Activated CD8-positive, alpha-beta T cell treated with anti-CD3 and anti-CD28 coated beads for 36 hours (primary cell): ENCODE measurements at regions of chr11 and their contacts with region 1.

Region 1: GRCh38 chr11:65919146-65920033 is at the start of gene DRAP1:
- DNase-seq: peak; percentile 99
- ATAC-seq: peak; percentile 92
- H3K4me3 Mint-ChIP-seq: peak within 1 kb of the TSS; percentile 92
- H3K27ac Mint-ChIP-seq: peak within 1 kb of the TSS; percentile 87
- H3K4me1 Mint-ChIP-seq: peaks cover 32% of the 10 kb centered on the region
- H3K27me3 Mint-ChIP-seq: no peaks in the 10 kb centered on the region
- CTCF ChIP-seq: no peak
- total RNA-seq, gene DRAP1: 135 TPM

Region 2: GRCh38 chr11:65786001-65786785 is 133.2 kb before region 1 on chr11:
- CTCF ChIA-PET with region 1: no interaction called
- POLR2A ChIA-PET with region 1: no interaction called
- intact Hi-C with region 1: no loop called
- DNase-seq: no peak
- ATAC-seq: no peak
- H3K4me3 Mint-ChIP-seq: peak overlapping the region; percentile 37
- H3K27ac Mint-ChIP-seq: no peak overlapping the region
- H3K4me1 Mint-ChIP-seq: peaks cover 25% of the 10 kb centered on the region
- H3K27me3 Mint-ChIP-seq: peaks cover 42% of the 10 kb centered on the region
- CTCF ChIP-seq: no peak

Region 3: GRCh38 chr11:65900125-65900898 is 19.1 kb before region 1 on chr11 and contains the start of gene FOSL1:
- CTCF ChIA-PET with region 1: interaction called, 3 read pairs
- POLR2A ChIA-PET with region 1: interaction called, 18 read pairs
- intact Hi-C with region 1: no loop called
- DNase-seq: peak; percentile 97
- ATAC-seq: peak; percentile 88
- H3K4me3 Mint-ChIP-seq: peak within 1 kb of the TSS; percentile 80
- H3K27ac Mint-ChIP-seq: peak within 1 kb of the TSS; percentile 86
- H3K4me1 Mint-ChIP-seq: peaks cover 32% of the 10 kb centered on the region
- H3K27me3 Mint-ChIP-seq: peaks cover 5% of the 10 kb centered on the region
- CTCF ChIP-seq: no peak
- total RNA-seq, gene FOSL1: 9.9 to 10.2 TPM

Region 4: GRCh38 chr11:65961232-65961901 is 42.0 kb after region 1 on chr11 and contains the start of gene SART1:
- CTCF ChIA-PET with region 1: no interaction called
- POLR2A ChIA-PET with region 1: interaction called, 6 read pairs
- intact Hi-C with region 1: loop called (anchors 1 kb)
- DNase-seq: peak; percentile 98
- ATAC-seq: peak; percentile 91
- H3K4me3 Mint-ChIP-seq: peak within 1 kb of the TSS; percentile 82
- H3K27ac Mint-ChIP-seq: peak within 1 kb of the TSS; percentile 97
- H3K4me1 Mint-ChIP-seq: peaks cover 47% of the 10 kb centered on the region
- H3K27me3 Mint-ChIP-seq: no peaks in the 10 kb centered on the region
- CTCF ChIP-seq: no peak
- total RNA-seq, gene SART1: 58.3 to 63.9 TPM